SK-N-SH (cell line): ENCODE measurements at regions of chr17 and their contacts with region 1.

Region 1: GRCh38 chr17:3012926-3013581 is 50.4 kb downstream of the OR1D5 start:
- DNase-seq: peak; percentile 84
- H3K4me3 ChIP-seq: no peak overlapping the region
- H3K27ac ChIP-seq: peak overlapping the region in 1 of 2 experiments; percentile 53; a peak in 1 of 4 replicates
- H3K4me1 ChIP-seq: peaks cover 0 to 3% of the 10 kb centered on the region in 2 experiments; a peak in 1 of 4 replicates
- H3K27me3 ChIP-seq: no peaks in the 10 kb centered on the region
- CTCF ChIP-seq: peak; percentile 69
- EP300 ChIP-seq: no peak
- RAD21 ChIP-seq: peak; percentile 86

Region 2: DNA sequence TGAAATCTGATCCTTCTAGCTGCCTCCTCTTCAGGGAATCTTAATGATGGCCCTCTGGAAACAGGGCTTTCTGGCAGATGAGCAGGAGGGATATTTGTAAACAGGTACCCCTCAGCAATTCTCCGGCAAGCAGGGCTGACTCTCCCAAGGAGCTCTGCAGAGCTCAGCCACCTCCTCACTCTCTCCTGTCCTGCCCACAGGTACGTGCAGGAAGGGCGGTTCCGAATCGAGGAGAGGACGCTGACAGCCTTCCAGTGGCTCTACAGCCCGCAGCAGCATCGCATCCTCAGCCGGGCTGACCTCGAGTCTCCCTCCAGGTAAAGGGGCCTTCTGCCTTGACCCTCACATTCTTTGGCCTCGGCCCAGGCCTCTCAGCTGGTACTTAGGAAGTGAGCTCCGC is 242.9 kb before region 1 on chr17:
- CTCF ChIA-PET with region 1: no interaction called
- POLR2A ChIA-PET with region 1: no interaction called
- DNase-seq: no peak
- H3K4me3 ChIP-seq: no peak overlapping the region
- H3K27ac ChIP-seq: no peak overlapping the region
- H3K4me1 ChIP-seq: no peaks in the 10 kb centered on the region
- H3K27me3 ChIP-seq: peaks cover 7% of the 10 kb centered on the region; the same call in 1 of the 2 replicates
- CTCF ChIP-seq: no peak
- EP300 ChIP-seq: no peak
- RAD21 ChIP-seq: no peak

Region 3: GRCh38 chr17:2828397-2829038 is 184.5 kb before region 1 on chr17:
- CTCF ChIA-PET with region 1: interaction called, 28 read pairs
- POLR2A ChIA-PET with region 1: no interaction called
- DNase-seq: peak; percentile 94
- H3K4me3 ChIP-seq: peak overlapping the region in 1 of 2 experiments; percentile 13; a peak in 1 of 4 replicates
- H3K27ac ChIP-seq: no peak overlapping the region
- H3K4me1 ChIP-seq: peaks cover 0 to 2% of the 10 kb centered on the region in 2 experiments; a peak in 1 of 4 replicates
- H3K27me3 ChIP-seq: no peaks in the 10 kb centered on the region
- CTCF ChIP-seq: peak; percentile 89
- EP300 ChIP-seq: no peak
- RAD21 ChIP-seq: peak; percentile 92

Region 4: DNA sequence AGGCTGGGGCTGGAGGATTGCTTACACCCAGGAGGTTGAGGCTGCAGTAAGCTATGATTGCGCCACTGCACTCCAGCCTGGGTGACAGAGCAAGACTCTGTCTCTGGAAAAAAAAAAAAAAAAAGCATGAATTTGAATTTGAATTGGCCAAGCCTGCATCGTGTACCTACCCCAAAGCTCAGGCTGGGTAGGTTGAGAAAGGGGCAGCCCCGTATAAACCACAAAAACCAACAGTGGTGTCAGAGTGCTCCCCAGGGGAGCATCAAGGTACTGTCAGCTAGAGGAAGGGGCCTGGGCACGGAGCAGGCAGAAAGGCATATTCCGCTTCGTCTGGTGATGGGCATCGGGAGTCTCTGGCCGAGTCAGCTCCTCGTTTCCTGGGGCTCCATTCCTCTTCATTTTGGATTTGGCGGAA is 175.9 kb before region 1 on chr17:
- CTCF ChIA-PET with region 1: interaction called, 10 read pairs
- POLR2A ChIA-PET with region 1: no interaction called
- DNase-seq: no peak
- H3K4me3 ChIP-seq: no peak overlapping the region
- H3K27ac ChIP-seq: no peak overlapping the region
- H3K4me1 ChIP-seq: peaks cover 0 to 7% of the 10 kb centered on the region in 2 experiments; a peak in 1 of 4 replicates
- H3K27me3 ChIP-seq: no peaks in the 10 kb centered on the region
- CTCF ChIP-seq: no peak
- EP300 ChIP-seq: no peak
- RAD21 ChIP-seq: no peak

Region 5: DNA sequence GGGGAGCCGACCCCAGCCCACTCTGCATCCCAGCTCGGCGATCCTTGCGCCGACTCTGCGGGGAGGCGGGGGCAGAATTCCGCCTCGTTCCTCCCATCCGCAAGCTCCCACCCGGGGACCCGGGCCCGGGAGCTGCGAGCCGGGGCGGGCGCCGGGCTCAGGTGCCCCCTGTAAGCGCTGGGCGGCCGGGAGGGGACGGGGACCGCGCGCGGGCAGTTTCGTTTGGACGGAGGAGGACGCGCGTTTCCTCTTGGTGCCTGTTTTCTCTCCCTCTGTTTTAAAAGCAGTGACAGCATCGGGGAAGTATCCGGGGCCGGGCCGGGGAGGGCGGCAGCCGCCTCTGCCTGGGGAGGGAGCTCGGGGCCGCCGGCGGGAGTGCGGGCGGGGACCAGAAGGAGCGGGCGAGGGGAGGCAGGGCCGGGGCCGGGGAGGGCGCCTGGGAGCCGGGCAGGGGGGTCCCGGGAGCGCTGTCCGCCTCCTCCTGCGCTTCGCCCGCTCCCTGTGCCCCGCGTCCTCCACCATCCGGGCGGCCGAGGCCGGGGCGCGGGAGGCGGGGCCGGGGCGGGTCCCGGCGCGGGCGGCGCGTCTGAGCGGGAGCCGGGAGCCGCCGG is 159.8 kb before region 1 on chr17:
- CTCF ChIA-PET with region 1: interaction called, 238 read pairs
- POLR2A ChIA-PET with region 1: interaction called, 3 read pairs
- DNase-seq: peak; percentile 79
- H3K4me3 ChIP-seq: peak overlapping the region; percentile 66 to 69
- H3K27ac ChIP-seq: peak overlapping the region; percentile 66 to 90
- H3K4me1 ChIP-seq: peaks cover 4 to 42% of the 10 kb centered on the region in 2 experiments; a peak in 2 of 4 replicates
- H3K27me3 ChIP-seq: no peaks in the 10 kb centered on the region
- CTCF ChIP-seq: no peak
- EP300 ChIP-seq: no peak
- RAD21 ChIP-seq: no peak

Region 6: GRCh38 chr17:2929881-2930533 is 83.0 kb before region 1 on chr17:
- CTCF ChIA-PET with region 1: interaction called, 28 read pairs
- POLR2A ChIA-PET with region 1: no interaction called
- DNase-seq: peak; percentile 85
- H3K4me3 ChIP-seq: no peak overlapping the region; a peak in 1 of 4 replicates
- H3K27ac ChIP-seq: peak overlapping the region in 1 of 2 experiments; percentile 94; a peak in 2 of 4 replicates
- H3K4me1 ChIP-seq: peaks cover 6 to 59% of the 10 kb centered on the region in 2 experiments; a peak in 2 of 4 replicates
- H3K27me3 ChIP-seq: no peaks in the 10 kb centered on the region
- CTCF ChIP-seq: peak; percentile 76
- EP300 ChIP-seq: 0 out of 4 replicates have a peak, but pooled peaks of 1 of the 2 experiments have one; percentile 24
- RAD21 ChIP-seq: peak; percentile 87

Region 7: DNA sequence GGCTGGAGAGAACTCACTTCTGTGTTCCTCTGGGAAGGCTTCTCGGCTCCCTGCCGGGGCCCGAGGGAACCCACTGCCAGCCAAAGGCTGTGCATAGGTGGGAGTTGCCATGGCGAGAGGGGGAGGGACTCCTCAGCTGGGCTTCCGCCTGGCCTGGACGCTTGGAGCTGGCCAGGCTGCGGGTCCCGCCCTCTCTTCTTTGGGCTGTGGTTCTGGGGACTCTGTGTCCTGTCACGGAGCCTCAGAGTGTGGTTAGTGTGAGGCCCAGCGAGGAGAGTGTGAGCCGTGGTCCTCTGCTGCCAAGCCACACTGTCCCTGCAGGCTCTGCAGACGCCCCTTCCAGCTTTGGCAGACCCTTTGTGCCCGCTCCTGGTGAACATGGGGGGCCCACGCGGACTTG is 72.7 kb before region 1 on chr17:
- CTCF ChIA-PET with region 1: interaction called, 16 read pairs
- POLR2A ChIA-PET with region 1: no interaction called
- DNase-seq: no peak
- H3K4me3 ChIP-seq: no peak overlapping the region
- H3K27ac ChIP-seq: no peak overlapping the region; a peak in 1 of 4 replicates
- H3K4me1 ChIP-seq: peaks cover 0 to 27% of the 10 kb centered on the region in 2 experiments; a peak in 1 of 4 replicates
- H3K27me3 ChIP-seq: no peaks in the 10 kb centered on the region
- CTCF ChIP-seq: no peak
- EP300 ChIP-seq: no peak
- RAD21 ChIP-seq: no peak

Region 8: DNA sequence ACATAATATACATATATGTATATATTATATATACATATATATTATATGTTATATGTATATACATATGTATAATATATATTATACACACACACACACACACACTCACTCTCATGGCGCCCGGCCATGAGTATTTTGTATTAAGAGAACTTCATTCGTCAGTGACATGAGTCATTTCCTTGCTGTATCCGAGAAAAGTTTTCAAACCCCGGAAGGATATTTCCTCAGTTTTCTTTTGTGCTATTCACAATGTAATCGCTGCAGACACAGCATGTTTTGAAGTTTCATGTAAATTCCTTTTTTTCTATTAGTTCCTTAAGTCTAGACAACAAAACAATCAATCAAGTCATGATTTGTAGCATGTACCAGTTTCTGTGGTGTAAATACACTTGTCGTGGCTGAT is 17.0 kb after region 1 on chr17:
- CTCF ChIA-PET with region 1: interaction called, 14 read pairs
- POLR2A ChIA-PET with region 1: no interaction called
- DNase-seq: no peak
- H3K4me3 ChIP-seq: no peak overlapping the region
- H3K27ac ChIP-seq: peak overlapping the region in 1 of 2 experiments; percentile 61; a peak in 2 of 4 replicates
- H3K4me1 ChIP-seq: peaks cover 0 to 5% of the 10 kb centered on the region in 2 experiments; a peak in 2 of 4 replicates
- H3K27me3 ChIP-seq: no peaks in the 10 kb centered on the region
- CTCF ChIP-seq: no peak
- EP300 ChIP-seq: no peak
- RAD21 ChIP-seq: no peak

Region 9: DNA sequence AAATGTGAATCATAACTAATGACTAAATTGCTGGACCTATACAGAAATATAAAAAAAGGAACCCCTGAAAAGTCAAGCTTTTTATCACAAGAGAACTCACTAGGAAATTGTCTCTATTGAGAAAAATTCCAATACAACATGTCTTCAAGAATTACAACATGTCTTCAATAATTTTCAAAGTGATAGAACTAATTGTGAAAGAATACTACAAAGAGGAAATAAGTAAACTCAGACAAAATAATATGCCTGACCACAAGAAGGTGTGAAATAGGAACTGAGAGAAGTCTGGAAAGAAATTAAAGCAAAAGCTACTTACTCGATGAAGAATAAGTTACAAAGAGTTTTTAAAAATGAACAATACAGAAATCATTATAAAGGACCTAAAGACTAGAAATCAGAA is 144.2 kb after region 1 on chr17:
- CTCF ChIA-PET with region 1: no interaction called
- POLR2A ChIA-PET with region 1: no interaction called
- DNase-seq: no peak
- H3K4me3 ChIP-seq: no peak overlapping the region
- H3K27ac ChIP-seq: no peak overlapping the region
- H3K4me1 ChIP-seq: no peaks in the 10 kb centered on the region
- H3K27me3 ChIP-seq: peaks cover 26% of the 10 kb centered on the region; the same call in 1 of the 2 replicates
- CTCF ChIP-seq: no peak
- EP300 ChIP-seq: no peak
- RAD21 ChIP-seq: no peak